ENCODE measurements at regions of chr5 and their contacts with region 1.

Region 1: DNA sequence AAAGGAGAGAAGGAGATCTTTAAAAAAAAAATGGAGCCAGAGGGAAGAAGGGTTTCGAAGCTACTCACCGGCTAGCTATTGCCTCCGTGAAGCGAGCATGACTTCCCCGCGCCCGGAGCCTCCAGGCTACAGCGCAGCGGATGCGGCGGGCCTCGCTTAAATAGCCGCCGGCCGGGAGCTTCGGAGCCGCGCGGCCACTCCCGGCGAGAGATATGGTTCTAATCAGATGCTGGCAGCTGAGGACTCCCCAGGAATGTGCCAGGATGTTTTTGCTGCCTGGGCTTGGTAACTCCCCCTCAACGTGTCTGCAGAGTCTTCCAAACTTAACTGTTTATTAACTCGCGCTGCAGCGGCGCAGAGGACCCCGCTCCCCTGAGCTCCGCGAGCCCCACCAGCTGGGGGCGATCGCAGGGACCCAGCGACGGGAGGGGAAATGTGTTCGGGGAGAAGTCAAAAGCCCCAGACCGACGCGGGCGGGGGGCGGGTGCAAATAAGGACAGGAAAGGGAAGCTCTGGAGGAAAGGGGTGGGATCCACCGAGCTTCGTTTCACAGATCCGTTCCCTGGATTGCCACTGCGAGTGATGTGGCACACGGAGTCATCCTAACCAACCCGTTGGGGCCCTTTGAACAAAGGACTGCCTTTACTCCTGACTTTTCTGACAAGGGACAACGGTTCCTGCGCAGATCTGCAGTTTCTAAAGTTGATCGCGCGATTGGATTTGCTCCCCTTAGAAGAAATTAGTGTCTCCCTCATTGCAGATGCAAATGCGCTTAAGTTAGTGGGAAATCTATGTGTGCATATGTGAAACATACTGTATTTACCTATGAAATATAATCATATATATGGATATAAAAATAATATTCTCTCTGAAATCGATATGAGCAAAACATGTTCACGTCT is at the start of gene DAB2:
- DNase-seq: peak; percentile 93
- H3K4me3 ChIP-seq: peak within 1 kb of the TSS; percentile 85
- H3K27ac ChIP-seq: peak within 1 kb of the TSS; percentile 96
- H3K27me3 ChIP-seq: no peaks in the 10 kb centered on the region
- CTCF ChIP-seq: peak; percentile 74
- polyA plus RNA-seq, gene DAB2: 177 and 206 TPM in 2 replicates

Region 2: GRCh38 chr5:38961691-38962090 is 463.3 kb before region 1 on chr5:
- CTCF ChIA-PET with region 1: no interaction called
- POLR2A ChIA-PET with region 1: no interaction called
- DNase-seq: no peak
- H3K4me3 ChIP-seq: no peak overlapping the region
- H3K27ac ChIP-seq: no peak overlapping the region
- H3K27me3 ChIP-seq: no peaks in the 10 kb centered on the region
- CTCF ChIP-seq: no peak

Region 3: GRCh38 chr5:39284552-39284951 is 140.4 kb before region 1 on chr5:
- CTCF ChIA-PET with region 1: no interaction called
- POLR2A ChIA-PET with region 1: no interaction called
- DNase-seq: no peak
- H3K4me3 ChIP-seq: no peak overlapping the region
- H3K27ac ChIP-seq: no peak overlapping the region
- H3K27me3 ChIP-seq: no peaks in the 10 kb centered on the region
- CTCF ChIP-seq: no peak

Region 4: GRCh38 chr5:39299962-39300361 is 125.0 kb before region 1 on chr5:
- CTCF ChIA-PET with region 1: no interaction called
- POLR2A ChIA-PET with region 1: no interaction called
- DNase-seq: no peak
- H3K4me3 ChIP-seq: no peak overlapping the region
- H3K27ac ChIP-seq: no peak overlapping the region
- H3K27me3 ChIP-seq: no peaks in the 10 kb centered on the region
- CTCF ChIP-seq: no peak

Region 5: DNA sequence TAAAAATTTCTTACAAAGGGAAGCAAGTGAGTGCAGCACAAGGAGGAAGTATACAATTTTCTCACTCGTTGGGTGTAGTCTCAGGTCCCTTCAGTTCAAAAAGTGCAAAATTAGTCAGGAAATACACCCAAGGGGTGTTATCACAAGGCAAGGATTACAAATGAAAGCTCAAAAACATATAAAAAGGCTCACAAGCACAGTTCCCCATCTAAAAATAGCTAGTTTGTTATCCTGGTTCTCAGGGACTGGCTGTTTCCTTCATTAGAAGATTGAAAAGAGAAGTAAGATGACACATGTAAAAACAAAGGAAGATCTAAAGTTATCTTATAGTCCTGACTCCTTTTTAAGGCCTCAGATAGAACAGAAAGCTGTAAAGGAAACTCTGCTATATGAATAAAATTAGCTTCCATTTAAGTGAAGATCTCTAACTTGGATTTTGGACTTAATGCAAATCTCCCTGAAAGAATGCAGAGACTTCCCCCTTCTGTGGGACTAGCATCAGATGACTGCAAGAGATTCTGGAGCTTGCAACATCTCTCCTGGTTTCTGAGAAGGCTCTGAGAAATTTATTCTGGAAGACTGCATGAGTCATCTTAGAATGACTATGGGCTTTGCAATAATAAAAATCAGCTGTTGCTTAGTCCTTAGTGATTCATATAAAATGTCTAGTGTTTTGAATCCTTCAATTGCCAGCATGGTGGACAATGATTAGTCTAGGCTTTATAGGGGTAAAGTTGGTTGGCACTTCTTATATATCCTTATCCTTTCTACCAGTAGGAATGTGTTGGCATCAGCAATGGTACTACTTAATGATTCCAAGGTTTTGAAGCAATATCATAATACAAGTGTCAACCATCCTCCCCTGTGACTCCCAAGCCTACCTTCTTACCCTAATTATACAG is 25.6 kb before region 1 on chr5:
- CTCF ChIA-PET with region 1: interaction called, 14 read pairs
- POLR2A ChIA-PET with region 1: interaction called, 37 read pairs
- DNase-seq: peak; percentile 93
- H3K4me3 ChIP-seq: no peak overlapping the region
- H3K27ac ChIP-seq: peak overlapping the region; percentile 92
- H3K27me3 ChIP-seq: no peaks in the 10 kb centered on the region
- CTCF ChIP-seq: no peak

Region 6: DNA sequence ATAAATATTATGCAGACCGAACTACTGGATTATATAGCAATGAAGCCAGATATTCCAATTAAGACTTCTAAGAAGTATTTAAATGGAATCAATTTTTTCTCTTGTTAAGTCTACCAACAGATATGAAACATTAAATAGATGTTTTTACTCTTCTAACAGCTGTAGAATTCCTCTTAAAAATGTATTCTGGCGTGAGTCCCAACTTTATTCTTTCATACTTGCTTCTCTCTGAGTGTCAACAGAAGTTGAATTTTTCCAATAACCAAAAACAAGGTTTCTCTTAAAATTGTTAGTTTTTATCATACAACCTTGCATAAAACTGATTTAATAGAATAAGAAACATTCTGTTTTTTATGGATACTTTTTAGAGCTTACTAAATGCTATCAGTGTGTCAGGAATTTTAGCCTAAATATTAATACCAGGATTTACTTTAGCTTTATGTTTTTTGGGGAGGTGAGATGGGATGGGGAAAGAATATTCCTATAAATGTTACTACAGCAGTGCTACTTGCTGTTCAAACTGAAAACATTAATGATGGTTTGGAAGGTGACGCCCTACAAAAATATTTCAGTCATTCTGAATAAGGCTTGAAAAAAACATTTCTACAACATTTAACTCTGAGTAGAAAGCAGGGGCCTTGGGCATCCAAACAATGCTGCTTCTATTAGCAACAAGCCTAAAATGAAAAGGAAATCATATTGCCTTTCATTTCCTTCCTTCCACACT is 15.7 kb after region 1 on chr5:
- CTCF ChIA-PET with region 1: interaction called, 8 read pairs
- POLR2A ChIA-PET with region 1: interaction called, 15 read pairs
- DNase-seq: no peak
- H3K4me3 ChIP-seq: no peak overlapping the region
- H3K27ac ChIP-seq: no peak overlapping the region
- H3K27me3 ChIP-seq: no peaks in the 10 kb centered on the region
- CTCF ChIP-seq: no peak

Region 7: GRCh38 chr5:39475881-39476842 is 51.2 kb after region 1 on chr5:
- CTCF ChIA-PET with region 1: interaction called, 18 read pairs
- POLR2A ChIA-PET with region 1: interaction called, 13 read pairs
- DNase-seq: peak; percentile 52
- H3K4me3 ChIP-seq: no peak overlapping the region
- H3K27ac ChIP-seq: peak overlapping the region; percentile 59
- H3K27me3 ChIP-seq: no peaks in the 10 kb centered on the region
- CTCF ChIP-seq: no peak

Region 8: DNA sequence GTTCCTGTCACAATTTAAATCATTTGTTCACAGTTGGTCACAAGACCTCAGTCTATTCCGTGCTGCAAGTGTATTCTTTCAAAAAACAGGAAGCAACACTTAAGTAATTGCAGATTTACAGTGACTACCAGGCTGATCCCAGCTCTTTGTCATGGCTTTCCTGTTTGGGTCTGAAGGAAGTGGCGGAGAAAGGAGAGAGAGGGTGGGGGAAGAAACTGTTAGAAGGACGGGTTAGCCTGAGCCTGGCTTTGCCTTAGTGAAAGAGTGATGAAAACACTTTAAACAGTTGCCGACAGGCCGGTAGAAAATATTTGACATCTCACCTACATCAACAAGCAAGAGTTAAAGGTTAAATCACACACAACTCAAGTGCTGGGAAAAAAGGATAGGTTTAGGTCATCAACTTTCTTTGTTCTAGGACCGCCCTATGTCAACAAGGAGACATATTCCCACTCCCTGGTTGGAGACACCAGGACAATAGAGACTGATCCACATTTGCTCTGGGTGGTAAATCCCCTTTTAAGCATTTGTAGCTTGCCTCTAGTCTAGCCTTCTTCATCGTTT is 102.0 kb after region 1 on chr5:
- CTCF ChIA-PET with region 1: interaction called, 14 read pairs
- POLR2A ChIA-PET with region 1: interaction called, 14 read pairs
- DNase-seq: no peak
- H3K4me3 ChIP-seq: no peak overlapping the region
- H3K27ac ChIP-seq: no peak overlapping the region
- H3K27me3 ChIP-seq: no peaks in the 10 kb centered on the region
- CTCF ChIP-seq: no peak

Region 9: GRCh38 chr5:39570403-39571027 is 145.5 kb after region 1 on chr5:
- CTCF ChIA-PET with region 1: interaction called, 20 read pairs
- POLR2A ChIA-PET with region 1: interaction called, 6 read pairs
- DNase-seq: no peak
- H3K4me3 ChIP-seq: no peak overlapping the region
- H3K27ac ChIP-seq: no peak overlapping the region
- H3K27me3 ChIP-seq: peaks cover 6% of the 10 kb centered on the region
- CTCF ChIP-seq: peak; percentile 78

Measured in AG04450 (cell line).